ENCODE measurements at regions of chr12 and their contacts with region 1.

Region 1: GRCh38 chr12:108457006-108457733 is 57.9 kb upstream of the FICD start:
- DNase-seq: peak in 1 of 5 donors; percentile 16
- ATAC-seq: peak; percentile 55 to 86 (median 81)
- H3K4me3 ChIP-seq: no peak overlapping the region
- H3K27ac ChIP-seq: no peak overlapping the region
- H3K4me1 ChIP-seq: peaks cover 0 to 5% (median 0%) of the 10 kb centered on the region in 12 donors
- H3K27me3 ChIP-seq: peaks cover 0 to 22% (median 11%) of the 10 kb centered on the region in 9 donors
- CTCF ChIP-seq: peak; percentile 57 to 79 (median 68)
- POLR2A ChIP-seq: no peak

Region 2: DNA sequence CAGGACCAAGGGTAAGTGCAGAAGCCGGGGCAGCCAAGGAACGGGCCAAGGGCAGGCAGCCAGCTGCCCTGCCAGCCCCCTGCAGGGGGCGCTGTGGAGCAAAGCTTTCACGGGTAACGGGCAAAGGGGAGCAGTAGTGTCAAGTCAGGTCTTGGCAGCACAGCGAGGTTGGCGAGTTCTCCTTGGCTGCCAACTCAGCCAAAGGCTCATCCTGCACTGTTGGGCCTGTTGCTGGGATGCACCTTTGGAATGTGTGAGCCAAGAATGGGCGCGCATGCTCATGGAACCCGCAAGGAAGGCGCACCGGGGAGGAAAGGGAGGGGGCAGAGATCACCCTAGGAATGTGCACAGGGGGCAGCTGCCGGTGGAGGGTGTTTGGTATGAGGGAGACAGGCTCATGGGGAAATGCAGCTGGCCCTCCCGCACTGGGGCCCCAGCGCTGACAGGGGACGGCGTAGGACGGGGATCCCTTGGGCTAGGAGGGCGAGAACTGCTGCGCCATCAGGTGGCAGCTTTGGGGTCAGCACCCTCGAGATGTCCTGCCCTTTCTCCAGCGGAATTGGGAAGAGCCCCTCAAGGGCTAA is 544.7 kb before region 1 on chr12:
- intact Hi-C with region 1: loop called in 1 of 10 experiments (anchors 10 kb)
- DNase-seq: peak in 3 of 5 donors; percentile 58 to 71 (median 70)
- ATAC-seq: peak in 3 of 4 donors; percentile 56 to 85 (median 56)
- H3K4me3 ChIP-seq: peak overlapping the region in 1 of 12 donors; percentile 35
- H3K27ac ChIP-seq: no peak overlapping the region
- H3K4me1 ChIP-seq: peaks cover 0 to 5% (median 0%) of the 10 kb centered on the region in 12 donors
- H3K27me3 ChIP-seq: peaks cover 3 to 78% (median 31%) of the 10 kb centered on the region in 9 donors
- CTCF ChIP-seq: peak in 11 of 12 donors; percentile 20 to 74 (median 40)
- POLR2A ChIP-seq: no peak

Region 3: DNA sequence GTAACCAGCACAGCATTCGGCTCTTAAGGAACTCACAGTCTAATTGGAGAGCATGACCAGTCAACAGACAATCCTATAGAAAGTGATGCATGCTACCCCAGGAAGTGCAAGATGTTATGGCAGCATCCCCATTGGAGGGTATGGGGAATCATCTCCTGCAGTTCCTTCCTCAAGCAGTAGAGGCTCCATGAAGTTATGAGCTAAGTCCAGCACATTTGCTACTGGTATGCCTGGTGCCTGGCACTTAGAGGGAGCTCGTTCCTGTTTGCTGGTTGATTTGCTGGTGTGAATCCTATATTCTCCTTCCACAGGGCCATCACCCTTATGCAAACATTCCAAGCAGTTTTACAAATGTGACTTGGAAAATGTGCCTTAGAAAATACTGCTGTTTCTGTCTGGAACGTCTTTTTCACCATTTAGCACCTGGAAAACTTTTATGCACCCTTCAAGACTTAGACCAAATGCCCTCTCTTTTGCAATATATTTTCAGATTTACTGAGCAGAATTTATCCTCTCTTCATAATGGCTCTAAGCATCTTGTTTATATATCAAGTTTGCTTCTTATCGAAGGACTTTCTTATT is 464.2 kb before region 1 on chr12:
- intact Hi-C with region 1: loop called in 6 of 10 experiments (anchors 5 kb)
- DNase-seq: no peak
- ATAC-seq: peak in 1 of 4 donors; percentile 38
- H3K4me3 ChIP-seq: no peak overlapping the region
- H3K27ac ChIP-seq: no peak overlapping the region
- H3K4me1 ChIP-seq: no peaks in the 10 kb centered on the region
- H3K27me3 ChIP-seq: peaks cover 0 to 26% (median 3%) of the 10 kb centered on the region in 9 donors
- CTCF ChIP-seq: peak in 10 of 12 donors; percentile 5 to 45 (median 24)
- POLR2A ChIP-seq: no peak

Region 4: DNA sequence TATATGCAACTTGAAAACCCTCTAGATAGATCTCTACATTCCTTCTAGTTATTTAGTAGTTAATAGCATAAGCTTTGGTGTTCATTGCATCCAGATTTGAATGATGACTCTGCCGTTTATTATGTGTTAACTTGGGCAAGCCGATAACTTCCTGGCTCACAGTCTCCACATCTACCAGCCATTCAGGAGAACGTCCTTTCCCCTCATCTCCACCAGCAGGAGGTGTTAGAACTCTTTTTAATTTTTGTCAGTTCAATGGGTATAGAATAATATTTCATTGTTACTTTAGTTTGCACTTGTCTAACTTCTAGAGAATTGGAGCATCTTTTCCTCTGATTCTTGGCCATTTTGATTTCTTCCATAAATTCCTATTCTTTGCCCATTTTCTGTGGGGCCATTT is 358.1 kb before region 1 on chr12:
- intact Hi-C with region 1: loop called in 5 of 10 experiments (anchors 5 to 10 kb)
- DNase-seq: no peak
- ATAC-seq: no peak
- H3K4me3 ChIP-seq: no peak overlapping the region
- H3K27ac ChIP-seq: no peak overlapping the region
- H3K4me1 ChIP-seq: no peaks in the 10 kb centered on the region
- H3K27me3 ChIP-seq: peaks cover 0 to 36% (median 5%) of the 10 kb centered on the region in 9 donors
- CTCF ChIP-seq: peak in 9 of 12 donors; percentile 16 to 46 (median 41)
- POLR2A ChIP-seq: no peak

Region 5: DNA sequence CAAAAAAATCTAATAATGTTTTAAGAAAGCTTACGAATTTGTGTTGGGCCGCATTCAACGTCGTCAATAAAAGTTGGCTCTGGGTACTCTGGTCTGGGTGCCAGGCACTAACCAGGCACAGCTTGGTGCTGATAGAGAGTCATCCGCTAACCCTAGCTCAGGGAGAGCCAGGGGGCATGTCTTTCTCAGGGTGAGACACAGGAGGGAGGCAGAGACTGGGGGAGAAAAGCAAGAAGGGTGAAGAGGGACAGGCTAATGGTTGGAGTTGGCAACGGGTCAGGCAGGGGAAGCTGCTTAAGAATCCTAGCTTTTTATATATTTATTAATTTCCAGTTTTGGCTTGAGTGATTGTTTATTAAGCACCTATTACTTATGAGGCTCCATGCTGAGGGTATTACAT is 223.0 kb before region 1 on chr12:
- intact Hi-C with region 1: loop called in 9 of 10 experiments (anchors 5 to 10 kb)
- DNase-seq: peak in 2 of 5 donors; percentile 26 to 29
- ATAC-seq: peak in 3 of 4 donors; percentile 68 to 75 (median 74)
- H3K4me3 ChIP-seq: no peak overlapping the region
- H3K27ac ChIP-seq: no peak overlapping the region
- H3K4me1 ChIP-seq: no peaks in the 10 kb centered on the region
- H3K27me3 ChIP-seq: peaks cover 0 to 31% (median 6%) of the 10 kb centered on the region in 9 donors
- CTCF ChIP-seq: peak in 9 of 12 donors; percentile 19 to 59 (median 46)
- POLR2A ChIP-seq: no peak

Region 6: GRCh38 chr12:108297895-108298760 is 159.0 kb before region 1 on chr12:
- intact Hi-C with region 1: loop called in 1 of 10 experiments (anchors 2 kb)
- DNase-seq: no peak
- ATAC-seq: no peak
- H3K4me3 ChIP-seq: no peak overlapping the region
- H3K27ac ChIP-seq: peak overlapping the region in 2 of 12 donors; percentile 18 to 67
- H3K4me1 ChIP-seq: peaks cover 0 to 71% (median 30%) of the 10 kb centered on the region in 12 donors
- H3K27me3 ChIP-seq: peaks cover 0 to 6% (median 0%) of the 10 kb centered on the region in 9 donors
- CTCF ChIP-seq: no peak
- POLR2A ChIP-seq: no peak